AG04449 (cell line): ENCODE measurements at regions of chr12 and their contacts with region 1.

Region 1: GRCh38 chr12:14239350-14239934 is 126.0 kb upstream of the ATF7IP start:
- DNase-seq: no peak
- H3K4me3 ChIP-seq: no peak overlapping the region; the same call in 1 of the 2 replicates
- CTCF ChIP-seq: no peak

Region 2: GRCh38 chr12:14167005-14167628 is 72.3 kb before region 1 on chr12:
- CTCF ChIA-PET with region 1: no interaction called
- POLR2A ChIA-PET with region 1: no interaction called
- DNase-seq: no peak
- H3K4me3 ChIP-seq: no peak overlapping the region
- CTCF ChIP-seq: peak; percentile 79

Region 3: GRCh38 chr12:14185427-14186192 is 53.8 kb before region 1 on chr12:
- CTCF ChIA-PET with region 1: interaction called, 15 read pairs
- POLR2A ChIA-PET with region 1: no interaction called
- DNase-seq: no peak
- H3K4me3 ChIP-seq: no peak overlapping the region
- CTCF ChIP-seq: peak; percentile 63

Region 4: GRCh38 chr12:14257734-14258574 is 18.5 kb after region 1 on chr12:
- CTCF ChIA-PET with region 1: interaction called, 14 read pairs
- POLR2A ChIA-PET with region 1: no interaction called
- DNase-seq: peak; percentile 99
- H3K4me3 ChIP-seq: no peak overlapping the region
- CTCF ChIP-seq: no peak

Region 5: DNA sequence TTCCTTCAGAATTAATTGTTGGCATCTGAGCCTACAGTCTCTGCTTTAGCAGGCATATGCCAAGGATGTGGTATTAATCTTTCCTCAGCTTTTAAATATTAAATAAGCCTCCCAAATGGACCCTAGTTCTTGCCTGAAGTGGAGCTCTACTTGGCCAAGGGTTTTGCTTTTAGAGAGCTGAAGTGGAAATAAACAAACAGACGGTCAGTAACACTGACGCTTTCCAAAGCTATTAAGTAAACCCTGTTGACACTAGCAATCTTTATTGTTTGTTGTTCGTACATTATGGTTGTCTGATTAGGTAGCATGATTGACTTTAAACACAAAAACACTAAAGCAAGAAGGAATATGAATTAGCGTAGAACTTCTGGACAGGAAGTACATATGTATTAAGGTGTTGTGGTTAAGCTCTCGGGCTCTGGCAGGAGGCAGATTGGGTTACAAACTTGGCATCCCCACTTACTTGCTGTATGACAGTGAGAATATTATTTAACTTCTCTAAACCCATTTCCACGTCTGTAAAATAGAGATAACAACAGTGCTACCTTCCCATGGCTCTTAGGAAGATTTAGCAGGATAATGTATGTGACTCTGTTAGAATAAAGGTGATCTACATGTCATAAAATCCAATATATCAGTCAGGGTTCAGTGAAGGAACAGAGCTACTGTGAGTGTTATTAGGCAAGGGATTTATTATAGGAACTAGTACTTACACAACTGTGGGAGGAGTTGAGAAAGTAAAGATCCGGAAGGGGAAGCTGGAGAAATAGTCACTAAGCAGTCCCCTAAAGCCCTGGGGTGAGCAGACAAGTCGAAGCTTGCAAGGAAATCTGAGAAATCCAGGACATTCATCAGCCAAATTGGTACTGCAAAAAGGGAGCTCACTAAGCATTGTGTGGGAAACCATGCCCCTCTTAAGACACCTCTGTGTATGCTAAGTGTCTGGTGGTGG is 33.8 kb after region 1 on chr12:
- CTCF ChIA-PET with region 1: no interaction called
- POLR2A ChIA-PET with region 1: no interaction called
- DNase-seq: no peak
- H3K4me3 ChIP-seq: no peak overlapping the region
- CTCF ChIP-seq: no peak

Region 6: DNA sequence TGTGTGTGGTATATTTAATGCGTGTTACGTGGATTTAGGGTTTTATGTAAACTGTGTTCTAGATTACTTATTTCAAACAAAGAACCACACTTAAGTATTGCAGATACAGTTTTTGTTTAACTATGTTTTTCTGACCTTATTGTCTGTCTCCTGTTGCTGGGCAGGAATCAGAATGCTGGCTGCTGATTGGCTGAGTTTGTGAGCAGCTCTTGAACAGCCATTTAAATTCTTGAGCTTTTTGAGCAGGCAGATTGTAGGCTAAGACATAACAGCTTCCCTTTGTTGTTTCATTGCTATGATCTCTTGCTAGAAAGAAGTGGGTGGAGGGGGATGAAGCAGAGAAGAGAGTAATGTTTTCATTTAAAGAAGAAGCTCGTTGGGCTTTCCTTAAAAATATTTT is 178.3 kb after region 1 on chr12:
- CTCF ChIA-PET with region 1: interaction called, 89 read pairs
- POLR2A ChIA-PET with region 1: no interaction called
- DNase-seq: peak; percentile 68
- H3K4me3 ChIP-seq: no peak overlapping the region
- CTCF ChIP-seq: no peak

Region 7: GRCh38 chr12:14454098-14454907 is 214.9 kb after region 1 on chr12:
- CTCF ChIA-PET with region 1: interaction called, 47 read pairs
- POLR2A ChIA-PET with region 1: no interaction called
- DNase-seq: no peak
- H3K4me3 ChIP-seq: no peak overlapping the region
- CTCF ChIP-seq: peak; percentile 34

Region 8: GRCh38 chr12:14618983-14619382 is 379.5 kb after region 1 on chr12:
- CTCF ChIA-PET with region 1: interaction called, 94 read pairs
- POLR2A ChIA-PET with region 1: no interaction called
- DNase-seq: no peak
- H3K4me3 ChIP-seq: no peak overlapping the region
- CTCF ChIP-seq: peak; percentile 28

Region 9: DNA sequence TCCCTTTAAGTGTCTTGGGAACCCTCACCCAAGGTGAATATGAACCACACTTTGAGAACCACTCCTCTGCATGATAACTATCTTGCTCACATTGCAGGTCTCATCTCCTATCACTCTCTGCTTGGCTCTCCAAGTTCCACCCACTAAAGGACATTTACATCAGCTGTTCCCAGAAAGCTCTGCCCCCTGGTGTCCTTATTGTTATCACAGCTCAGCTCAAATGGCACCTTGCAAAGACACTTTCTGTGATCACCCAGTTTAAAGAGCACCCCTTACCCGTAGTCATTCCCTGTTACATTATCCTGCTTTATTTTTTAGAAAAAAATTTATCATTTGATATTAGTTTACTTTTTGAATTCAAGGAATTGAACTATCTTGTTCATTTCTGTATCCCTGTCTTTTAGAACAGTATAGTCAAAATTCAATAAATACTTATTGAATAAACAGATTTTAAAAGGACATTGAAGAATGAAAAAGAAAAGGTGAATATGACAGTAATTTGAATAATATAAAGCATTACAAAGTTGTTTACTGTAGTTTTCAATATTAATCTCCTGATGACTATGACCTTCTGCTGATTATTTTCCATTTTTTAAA is 477.5 kb after region 1 on chr12:
- CTCF ChIA-PET with region 1: interaction called, 25 read pairs
- POLR2A ChIA-PET with region 1: no interaction called
- DNase-seq: no peak
- H3K4me3 ChIP-seq: no peak overlapping the region
- CTCF ChIP-seq: peak; percentile 64